ENCODE measurements at regions of chr17 and their contacts with region 1.

Region 1: GRCh38 chr17:61223725-61224124 is 175.9 kb upstream of the TBX2 start:
- DNase-seq: no peak
- H3K4me3 Mint-ChIP-seq: no peak overlapping the region
- H3K27ac Mint-ChIP-seq: no peak overlapping the region
- H3K4me1 Mint-ChIP-seq: no peaks in the 10 kb centered on the region
- H3K27me3 Mint-ChIP-seq: peaks cover 11% of the 10 kb centered on the region
- CTCF ChIP-seq: no peak

Region 2: DNA sequence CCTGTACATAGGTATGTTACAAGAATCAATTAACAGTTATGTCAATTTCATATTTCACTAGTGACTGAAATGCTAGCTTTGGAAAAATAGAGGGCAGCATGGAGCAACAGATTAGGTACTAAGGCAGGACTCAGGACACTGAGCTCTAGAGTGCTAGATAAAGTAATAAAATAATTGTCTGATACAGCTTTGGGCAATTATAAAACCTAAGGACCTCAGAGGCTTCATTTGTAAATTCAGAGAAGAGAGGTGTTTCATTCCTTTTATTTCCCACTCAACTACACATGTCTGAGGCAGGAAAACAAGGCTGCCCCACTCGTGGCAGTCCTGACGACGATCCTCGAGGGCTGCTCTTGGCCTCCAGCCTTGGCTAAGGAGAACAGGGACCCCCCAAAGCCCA is 992.5 kb before region 1 on chr17:
- CTCF ChIA-PET with region 1: no interaction called
- intact Hi-C with region 1: no loop called
- DNase-seq: no peak
- H3K4me3 Mint-ChIP-seq: no peak overlapping the region
- H3K27ac Mint-ChIP-seq: no peak overlapping the region
- H3K4me1 Mint-ChIP-seq: no peaks in the 10 kb centered on the region
- H3K27me3 Mint-ChIP-seq: no peaks in the 10 kb centered on the region
- CTCF ChIP-seq: no peak

Region 3: GRCh38 chr17:61254904-61255303 is 31.2 kb after region 1 on chr17:
- CTCF ChIA-PET with region 1: no interaction called
- intact Hi-C with region 1: no loop called
- DNase-seq: no peak
- H3K4me3 Mint-ChIP-seq: no peak overlapping the region
- H3K27ac Mint-ChIP-seq: no peak overlapping the region
- H3K4me1 Mint-ChIP-seq: no peaks in the 10 kb centered on the region
- H3K27me3 Mint-ChIP-seq: peaks cover 14% of the 10 kb centered on the region
- CTCF ChIP-seq: no peak

Region 4: DNA sequence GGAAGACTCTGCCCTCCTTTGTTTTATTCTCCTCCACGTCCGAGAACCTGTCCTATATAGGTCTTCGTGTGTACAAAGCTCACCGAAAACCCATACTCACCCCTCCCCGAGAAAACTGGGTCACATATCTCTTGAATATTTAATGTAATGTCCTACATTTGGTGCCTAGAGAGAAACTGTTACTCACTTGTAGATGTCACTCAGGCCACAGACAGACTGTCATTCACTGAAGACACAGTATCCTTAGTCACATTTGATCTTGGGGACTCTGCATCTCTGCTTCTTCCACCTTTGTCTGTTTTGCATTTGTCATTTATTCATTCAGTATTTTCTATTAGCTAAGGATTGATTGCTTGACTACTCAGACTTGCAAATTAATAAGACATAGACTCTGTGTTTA is 44.1 kb after region 1 on chr17:
- CTCF ChIA-PET with region 1: interaction called, 10 read pairs
- intact Hi-C with region 1: no loop called
- DNase-seq: no peak
- H3K4me3 Mint-ChIP-seq: no peak overlapping the region
- H3K27ac Mint-ChIP-seq: no peak overlapping the region
- H3K4me1 Mint-ChIP-seq: peaks cover 15% of the 10 kb centered on the region
- H3K27me3 Mint-ChIP-seq: no peaks in the 10 kb centered on the region
- CTCF ChIP-seq: no peak